Naive thymus-derived CD4-positive, alpha-beta T cell (primary cell): ENCODE measurements at regions of chr14 and their contacts with region 1.

Region 1: GRCh38 chr14:76812211-76813044 is at the start of gene ANGEL1:
- DNase-seq: peak; percentile 93 to 98 (median 96)
- ATAC-seq: peak; percentile 98
- H3K4me3 ChIP-seq: peak within 1 kb of the TSS; percentile 63
- H3K4me3 Mint-ChIP-seq: peak within 1 kb of the TSS; percentile 88 to 99 (median 93)
- H3K27ac ChIP-seq: peak within 1 kb of the TSS; percentile 87
- H3K27ac Mint-ChIP-seq: peak within 1 kb of the TSS; percentile 85 to 96 (median 94)
- H3K4me1 ChIP-seq: peaks cover 20 to 21% of the 10 kb centered on the region in 2 donors
- H3K4me1 Mint-ChIP-seq: peaks cover 16 to 48% (median 37%) of the 10 kb centered on the region in 7 donors
- H3K27me3 ChIP-seq: no peaks in the 10 kb centered on the region
- H3K27me3 Mint-ChIP-seq: no peaks in the 10 kb centered on the region
- total RNA-seq, gene ANGEL1: 14.5 to 37.6 (median 19.9) TPM

Region 2: GRCh38 chr14:76151398-76152339 is 660.8 kb before region 1 on chr14 and contains the start of gene GPATCH2L:
- CTCF ChIA-PET with region 1: no interaction called
- POLR2A ChIA-PET with region 1: no interaction called
- intact Hi-C with region 1: loop called in 1 of 2 experiments (anchors 2 kb)
- DNase-seq: peak; percentile 90 to 98 (median 95)
- ATAC-seq: peak; percentile 96
- H3K4me3 ChIP-seq: peak within 1 kb of the TSS; percentile 91
- H3K4me3 Mint-ChIP-seq: peak within 1 kb of the TSS; percentile 89 to 98 (median 95)
- H3K27ac ChIP-seq: peak within 1 kb of the TSS; percentile 95
- H3K27ac Mint-ChIP-seq: peak within 1 kb of the TSS; percentile 86 to 98 (median 96)
- H3K4me1 ChIP-seq: peaks cover 40 to 44% of the 10 kb centered on the region in 2 donors
- H3K4me1 Mint-ChIP-seq: peaks cover 40 to 56% (median 53%) of the 10 kb centered on the region in 7 donors
- H3K27me3 ChIP-seq: no peaks in the 10 kb centered on the region
- H3K27me3 Mint-ChIP-seq: peaks cover 0 to 18% (median 0%) of the 10 kb centered on the region in 5 donors
- total RNA-seq, gene GPATCH2L: 60.4 to 83.1 (median 66.6) TPM

Region 3: DNA sequence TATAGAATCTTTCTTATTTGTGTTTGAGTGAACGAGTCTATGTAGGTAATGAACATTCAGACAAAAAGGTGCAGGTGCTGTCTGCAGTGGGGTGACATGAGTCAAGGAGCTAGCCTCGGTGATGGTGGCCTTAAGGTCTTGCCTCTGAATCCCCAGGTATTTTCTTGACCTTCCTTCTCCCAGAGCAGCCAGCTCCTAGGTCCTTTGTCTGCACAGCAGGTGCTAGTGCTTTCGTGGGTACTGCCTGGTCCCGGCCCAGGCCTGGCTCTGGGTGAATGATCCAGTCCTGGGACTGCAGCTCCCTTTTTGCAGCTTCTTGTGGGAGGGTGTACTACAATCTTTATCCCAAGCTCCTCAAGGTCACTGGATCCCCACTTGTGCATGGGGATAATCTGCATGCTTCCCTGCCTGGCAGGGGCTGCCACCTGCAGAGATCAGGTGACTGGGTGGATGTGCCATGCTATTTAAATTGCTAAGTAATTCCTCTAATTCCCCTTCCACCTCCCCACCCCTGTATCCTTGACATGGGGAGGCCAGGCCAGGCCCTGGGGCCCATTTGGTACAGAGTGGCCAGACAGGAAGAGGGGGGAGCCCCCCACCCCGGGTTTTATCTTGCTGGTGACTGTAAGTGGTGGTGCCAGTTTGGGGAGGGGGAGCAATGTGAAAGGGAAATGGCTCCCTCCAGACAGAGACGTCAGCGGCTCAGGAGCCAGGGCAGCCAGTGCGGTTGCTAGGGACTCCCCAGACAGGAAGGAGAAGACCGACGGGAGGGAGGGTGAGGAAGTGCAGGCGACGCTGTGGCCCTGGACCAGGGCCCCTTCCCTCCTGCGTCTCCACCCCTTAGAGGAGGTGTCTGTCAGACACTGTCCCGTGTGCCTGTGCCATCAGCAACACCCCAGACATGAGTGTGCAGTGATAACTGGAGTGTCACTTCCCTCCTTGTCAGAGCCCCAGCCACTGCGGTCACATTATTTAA is 44.5 kb before region 1 on chr14:
- CTCF ChIA-PET with region 1: no interaction called
- POLR2A ChIA-PET with region 1: no interaction called
- intact Hi-C with region 1: loop called in 1 of 2 experiments (anchors 1 kb)
- DNase-seq: peak in 8 of 9 donors; percentile 28 to 74 (median 58)
- ATAC-seq: peak; percentile 98
- H3K4me3 ChIP-seq: no peak overlapping the region
- H3K4me3 Mint-ChIP-seq: peak overlapping the region in 7 of 10 donors; percentile 48 to 69 (median 57)
- H3K27ac ChIP-seq: peak overlapping the region; percentile 23
- H3K27ac Mint-ChIP-seq: peak overlapping the region in 8 of 9 donors; percentile 50 to 81 (median 70)
- H3K4me1 ChIP-seq: peaks cover 8 to 16% of the 10 kb centered on the region in 2 donors
- H3K4me1 Mint-ChIP-seq: peaks cover 0 to 38% (median 6%) of the 10 kb centered on the region in 7 donors
- H3K27me3 ChIP-seq: no peaks in the 10 kb centered on the region
- H3K27me3 Mint-ChIP-seq: peaks cover 0 to 28% (median 0%) of the 10 kb centered on the region in 5 donors

Region 4: DNA sequence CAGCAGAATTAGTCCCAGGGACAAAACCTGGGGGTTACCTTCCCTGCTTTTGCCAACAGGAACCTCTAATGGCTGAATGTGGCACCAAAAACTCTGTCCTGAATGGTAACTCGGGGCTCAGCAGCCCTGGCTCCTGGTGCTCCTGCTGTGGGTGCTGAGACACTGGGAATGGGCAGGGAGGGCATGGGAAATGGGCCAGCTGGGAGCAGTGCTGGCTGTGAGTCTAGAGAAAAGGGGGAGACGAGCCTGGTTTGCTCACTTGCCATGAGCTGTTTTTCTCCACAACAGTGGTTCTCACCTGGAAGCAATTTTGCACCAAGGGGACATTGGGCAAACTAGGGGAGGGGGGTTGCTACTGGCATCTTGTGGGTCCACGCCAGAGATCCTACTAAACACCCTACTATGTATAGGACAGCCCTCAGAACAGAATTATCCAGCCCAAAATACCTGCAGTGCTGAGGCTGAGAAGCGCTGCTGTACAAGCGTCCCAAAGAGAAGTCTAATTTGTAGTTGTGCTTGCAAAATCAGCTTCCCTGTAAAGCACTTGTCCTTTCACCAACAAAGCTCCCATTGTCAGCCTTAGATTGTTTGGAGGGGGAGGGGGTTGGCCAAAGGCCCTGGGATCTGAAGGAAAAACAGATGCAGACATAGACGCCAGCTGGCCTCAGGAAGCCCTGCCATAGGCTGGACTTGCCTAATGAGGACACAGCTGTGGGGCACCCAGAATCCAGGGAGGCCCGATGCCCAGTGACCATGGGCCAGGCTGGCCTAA is 17.4 kb after region 1 on chr14:
- CTCF ChIA-PET with region 1: no interaction called
- POLR2A ChIA-PET with region 1: no interaction called
- intact Hi-C with region 1: no loop called
- DNase-seq: no peak
- ATAC-seq: no peak
- H3K4me3 ChIP-seq: no peak overlapping the region
- H3K4me3 Mint-ChIP-seq: no peak overlapping the region
- H3K27ac ChIP-seq: no peak overlapping the region
- H3K27ac Mint-ChIP-seq: no peak overlapping the region
- H3K4me1 ChIP-seq: no peaks in the 10 kb centered on the region
- H3K4me1 Mint-ChIP-seq: peaks cover 0 to 1% (median 0%) of the 10 kb centered on the region in 7 donors
- H3K27me3 ChIP-seq: no peaks in the 10 kb centered on the region
- H3K27me3 Mint-ChIP-seq: peaks cover 3 to 20% (median 6%) of the 10 kb centered on the region in 5 donors

Region 5: DNA sequence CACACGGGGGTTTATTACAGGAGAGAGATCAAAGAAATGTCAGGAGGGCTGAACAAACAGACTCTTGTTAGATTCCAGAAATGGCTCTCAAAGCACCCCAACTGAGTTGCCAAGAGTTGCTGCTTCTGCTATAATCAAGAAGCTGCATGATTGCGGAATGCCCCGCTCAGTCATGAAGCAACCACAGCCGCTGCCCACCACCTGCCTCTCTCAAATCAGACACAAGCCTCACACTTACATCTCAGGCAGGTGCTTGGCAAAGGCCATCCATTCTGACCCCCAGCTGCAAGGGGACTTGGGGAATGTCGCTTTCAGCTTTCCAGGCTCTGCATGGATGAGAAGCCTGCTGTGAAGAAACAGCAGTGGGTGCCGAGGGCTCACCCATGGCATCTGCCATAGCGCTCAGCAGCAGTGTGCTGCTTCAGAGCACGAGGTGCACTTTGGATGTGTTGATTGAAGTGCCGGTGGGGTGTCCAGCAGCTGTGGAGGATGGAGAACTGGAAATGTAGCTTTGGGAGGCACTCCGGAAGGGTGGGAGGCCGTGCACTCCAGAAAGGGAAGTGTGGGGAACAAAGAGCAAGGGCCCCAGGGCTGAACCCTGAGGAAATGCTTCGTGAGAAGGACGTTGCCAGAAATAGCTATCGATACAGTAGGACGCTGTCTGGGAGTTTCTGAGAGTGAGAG is 51.4 kb after region 1 on chr14:
- CTCF ChIA-PET with region 1: no interaction called
- POLR2A ChIA-PET with region 1: no interaction called
- intact Hi-C with region 1: loop called in 1 of 2 experiments (anchors 2 kb)
- DNase-seq: peak in 1 of 9 donors; percentile 23
- ATAC-seq: peak; percentile 58
- H3K4me3 ChIP-seq: no peak overlapping the region
- H3K4me3 Mint-ChIP-seq: peak overlapping the region in 8 of 10 donors; percentile 33 to 68 (median 60)
- H3K27ac ChIP-seq: no peak overlapping the region
- H3K27ac Mint-ChIP-seq: peak overlapping the region; percentile 2 to 88 (median 78)
- H3K4me1 ChIP-seq: peaks cover 0 to 37% of the 10 kb centered on the region in 2 donors
- H3K4me1 Mint-ChIP-seq: peaks cover 23 to 57% (median 55%) of the 10 kb centered on the region in 7 donors
- H3K27me3 ChIP-seq: no peaks in the 10 kb centered on the region
- H3K27me3 Mint-ChIP-seq: peaks cover 0 to 14% (median 0%) of the 10 kb centered on the region in 5 donors

Region 6: GRCh38 chr14:77040059-77040740 is 227.8 kb after region 1 on chr14:
- CTCF ChIA-PET with region 1: no interaction called
- POLR2A ChIA-PET with region 1: no interaction called
- intact Hi-C with region 1: loop called in 1 of 2 experiments (anchors 2 kb)
- DNase-seq: peak; percentile 86 to 99 (median 99)
- ATAC-seq: peak; percentile 87
- H3K4me3 ChIP-seq: peak overlapping the region; percentile 78
- H3K4me3 Mint-ChIP-seq: peak overlapping the region; percentile 76 to 97 (median 87)
- H3K27ac ChIP-seq: peak overlapping the region; percentile 97
- H3K27ac Mint-ChIP-seq: peak overlapping the region; percentile 97 to 100 (median 99)
- H3K4me1 ChIP-seq: peaks cover 57 to 77% of the 10 kb centered on the region in 2 donors
- H3K4me1 Mint-ChIP-seq: peaks cover 50 to 97% (median 89%) of the 10 kb centered on the region in 7 donors
- H3K27me3 ChIP-seq: no peaks in the 10 kb centered on the region
- H3K27me3 Mint-ChIP-seq: no peaks in the 10 kb centered on the region

Region 7: DNA sequence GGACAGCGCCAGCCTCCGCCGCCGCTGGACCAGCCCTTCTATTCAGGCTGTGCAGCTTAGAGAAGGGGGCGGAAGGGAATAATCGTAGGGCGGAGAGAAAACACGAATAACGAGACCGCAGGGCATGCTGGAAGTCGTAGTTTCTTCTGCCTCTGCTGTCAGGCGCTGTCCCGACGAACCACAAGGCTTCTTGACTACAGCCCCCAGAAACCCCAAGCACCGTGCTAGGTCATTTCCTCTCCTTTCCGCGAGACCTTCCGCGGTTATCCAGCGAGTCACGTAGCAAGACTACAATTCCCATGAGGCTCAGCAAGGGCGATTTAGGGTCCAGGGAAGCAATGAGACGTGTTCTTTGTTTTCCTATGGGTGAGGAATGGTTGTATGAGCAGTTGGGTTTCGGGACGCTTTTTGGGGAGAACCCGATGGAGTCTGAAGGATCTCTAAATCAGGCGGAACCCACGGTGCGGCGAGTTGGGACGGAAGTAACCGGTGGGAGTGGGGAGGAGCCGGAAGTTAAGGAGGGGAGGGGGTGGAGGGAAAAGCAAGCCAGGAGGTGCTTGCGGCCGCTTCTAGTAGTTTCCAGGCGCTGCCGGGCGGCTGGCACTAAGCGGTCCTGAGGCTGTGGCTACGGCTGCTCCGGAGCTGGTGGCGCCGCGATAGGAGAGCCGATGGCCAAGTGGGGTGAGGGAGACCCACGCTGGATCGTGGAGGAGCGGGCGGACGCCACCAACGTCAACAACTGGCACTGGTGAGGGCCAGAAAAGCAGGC is 645.3 kb after region 1 on chr14 and contains the starts of genes AHSA1 and VIPAS39:
- CTCF ChIA-PET with region 1: no interaction called
- POLR2A ChIA-PET with region 1: no interaction called
- intact Hi-C with region 1: loop called (anchors 1 to 2 kb)
- DNase-seq: peak; percentile 67 to 98 (median 96)
- ATAC-seq: peak; percentile 98
- H3K4me3 ChIP-seq: peak within 1 kb of the TSS; percentile 100
- H3K4me3 Mint-ChIP-seq: peak within 1 kb of the TSS; percentile 96 to 100 (median 100)
- H3K27ac ChIP-seq: peak within 1 kb of the TSS; percentile 82
- H3K27ac Mint-ChIP-seq: peak within 1 kb of the TSS; percentile 94 to 100 (median 99)
- H3K4me1 ChIP-seq: peaks cover 20 to 26% of the 10 kb centered on the region in 2 donors
- H3K4me1 Mint-ChIP-seq: peaks cover 22 to 67% (median 53%) of the 10 kb centered on the region in 7 donors
- H3K27me3 ChIP-seq: no peaks in the 10 kb centered on the region
- H3K27me3 Mint-ChIP-seq: no peaks in the 10 kb centered on the region
- total RNA-seq, gene AHSA1: 51.6 to 176 (median 103) TPM
- total RNA-seq, gene VIPAS39: 12.1 to 21.2 (median 20.5) TPM

Region 8: DNA sequence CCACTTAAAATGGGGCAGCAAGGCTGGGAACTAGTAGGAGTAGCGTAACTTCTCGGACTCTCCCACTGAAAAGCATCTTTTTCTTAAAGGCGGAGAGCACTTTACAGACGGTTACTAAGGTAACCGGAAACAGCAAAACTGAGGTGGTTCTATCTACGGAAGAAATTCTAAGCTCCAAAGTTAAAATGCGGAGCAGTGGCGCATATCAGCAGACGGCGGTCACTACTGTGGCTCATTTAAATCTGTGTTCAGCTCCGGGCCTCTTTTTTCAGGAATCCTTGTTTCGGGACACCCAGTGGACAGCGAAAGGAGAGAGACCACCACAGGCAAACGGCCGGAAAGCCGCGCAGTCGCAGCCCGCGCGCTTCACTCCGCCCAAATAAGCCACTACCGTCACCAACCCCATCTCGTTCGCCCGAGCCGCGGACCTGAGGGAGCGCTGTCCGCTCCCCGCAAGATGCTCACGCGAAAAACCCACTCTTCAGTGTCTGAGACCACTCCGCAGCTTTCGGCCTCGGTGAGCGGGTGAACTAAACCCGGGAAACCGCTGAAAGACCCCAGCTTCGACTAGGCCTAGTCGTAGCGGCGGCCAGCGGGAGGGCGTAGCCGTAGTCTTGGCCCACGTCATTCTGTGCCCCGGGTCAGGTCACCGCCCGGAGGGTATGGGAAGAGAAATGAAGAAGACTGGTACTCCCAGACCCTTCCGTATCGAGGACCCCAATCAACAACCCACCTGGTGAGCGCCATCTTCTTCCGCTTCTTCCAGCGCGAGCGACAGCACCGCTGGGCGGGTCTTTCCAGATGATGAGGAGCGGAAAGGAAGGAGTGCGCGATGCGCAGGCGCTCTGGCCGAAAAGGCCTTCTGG is 948.2 kb after region 1 on chr14 and contains the start of gene SNW1:
- CTCF ChIA-PET with region 1: no interaction called
- POLR2A ChIA-PET with region 1: no interaction called
- intact Hi-C with region 1: loop called in 1 of 2 experiments (anchors 10 kb)
- DNase-seq: peak; percentile 80 to 94 (median 90)
- ATAC-seq: peak; percentile 95
- H3K4me3 ChIP-seq: peak within 1 kb of the TSS; percentile 94
- H3K4me3 Mint-ChIP-seq: peak within 1 kb of the TSS; percentile 91 to 97 (median 95)
- H3K27ac ChIP-seq: peak within 1 kb of the TSS; percentile 97
- H3K27ac Mint-ChIP-seq: peak within 1 kb of the TSS; percentile 92 to 99 (median 98)
- H3K4me1 ChIP-seq: peaks cover 28 to 30% of the 10 kb centered on the region in 2 donors
- H3K4me1 Mint-ChIP-seq: peaks cover 26 to 60% (median 42%) of the 10 kb centered on the region in 7 donors
- H3K27me3 ChIP-seq: no peaks in the 10 kb centered on the region
- H3K27me3 Mint-ChIP-seq: no peaks in the 10 kb centered on the region
- total RNA-seq, gene SNW1: 84.4 to 108 (median 97.7) TPM